Activated CD4-positive, alpha-beta T cell treated with anti-CD3 and anti-CD28 coated beads for 36 hours (primary cell): ENCODE measurements at regions of chr16 and their contacts with region 1.

Region 1: DNA sequence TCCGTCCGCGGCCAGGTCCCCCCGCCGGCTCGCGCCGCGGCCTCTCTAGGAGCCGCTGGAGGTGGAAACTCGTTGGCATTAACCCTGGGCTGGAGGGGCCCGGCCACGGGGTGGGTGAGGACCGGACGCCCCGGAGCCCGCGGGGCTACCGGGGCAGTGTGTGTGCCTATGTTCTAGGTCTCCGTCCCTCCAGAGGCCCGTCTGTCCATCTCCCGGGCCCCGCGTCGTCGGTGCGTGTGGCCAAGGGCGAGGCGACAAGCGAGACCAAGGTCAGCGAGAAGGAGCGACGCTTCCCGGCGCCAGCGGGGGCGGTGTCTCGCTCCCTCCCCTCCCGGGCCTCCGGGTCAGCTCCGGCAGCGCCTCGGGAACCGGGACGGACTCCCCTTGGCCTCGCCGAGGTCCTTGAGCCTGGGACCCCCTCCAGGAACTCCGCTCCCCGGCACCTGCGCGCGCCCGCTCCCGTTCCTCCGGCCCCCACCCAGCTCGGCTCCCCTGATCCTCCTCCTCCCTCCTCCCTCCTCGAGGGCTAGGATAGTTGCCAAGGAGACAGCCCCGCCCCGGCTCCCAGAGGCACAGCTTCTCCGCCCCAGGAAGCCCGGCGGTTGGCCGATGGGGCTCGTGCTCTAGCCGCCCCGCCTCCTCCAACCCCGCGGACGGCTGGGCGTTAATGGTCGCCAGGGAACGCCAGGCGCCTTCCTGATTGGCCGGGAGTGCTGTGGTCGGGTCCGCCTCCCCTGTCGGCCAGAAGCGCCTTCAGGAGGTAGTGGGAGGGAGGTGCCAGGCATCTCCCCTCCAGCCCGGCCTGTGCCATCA is 663 bp upstream of the ZNF768 start:
- DNase-seq: peak; percentile 98
- ATAC-seq: peak; percentile 93
- H3K4me3 Mint-ChIP-seq: peak overlapping the region; percentile 55
- H3K27ac Mint-ChIP-seq: peak overlapping the region; percentile 62
- H3K4me1 Mint-ChIP-seq: peaks cover 37% of the 10 kb centered on the region
- H3K27me3 Mint-ChIP-seq: no peaks in the 10 kb centered on the region

Region 2: DNA sequence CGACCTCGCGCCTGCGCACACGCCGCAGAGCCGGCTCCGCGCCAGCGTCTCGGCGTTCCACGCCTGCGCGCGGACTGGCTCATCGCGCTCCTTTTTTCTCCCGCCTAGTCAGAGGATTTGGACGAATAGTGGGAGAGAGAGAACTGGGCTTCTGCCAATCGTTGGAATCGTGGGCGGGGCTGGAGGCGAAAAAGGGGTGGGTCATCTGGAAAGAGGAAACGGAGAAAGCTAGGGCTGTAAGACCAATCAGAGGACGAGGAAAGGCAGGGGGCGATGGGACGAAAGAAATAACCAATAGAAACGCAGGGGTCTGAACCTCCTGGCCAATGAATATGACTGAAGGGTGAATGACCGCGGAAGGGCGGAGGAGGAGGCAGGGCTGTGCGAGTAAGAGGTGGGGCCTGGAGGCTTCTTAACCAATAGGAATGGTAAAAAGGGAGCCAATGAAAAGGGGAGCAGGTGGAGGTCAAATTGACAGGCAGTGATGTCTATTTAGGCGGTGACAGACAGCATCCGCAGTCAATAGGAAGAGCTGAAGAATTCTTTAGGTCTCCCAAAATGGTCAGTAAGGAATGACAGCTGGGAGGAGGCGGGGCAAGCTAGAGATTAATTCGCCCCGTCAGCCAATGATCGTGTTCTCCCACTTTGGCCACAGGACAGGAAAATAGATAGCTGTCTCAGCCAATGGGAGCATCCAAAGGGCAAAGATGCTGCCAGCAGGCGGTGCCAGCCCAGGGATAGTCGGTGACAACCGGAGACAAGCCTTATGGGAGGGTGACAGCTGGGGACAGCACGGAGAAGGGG is 156.4 kb before region 1 on chr16 and contains the start of gene TBC1D10B:
- CTCF ChIA-PET with region 1: no interaction called
- POLR2A ChIA-PET with region 1: no interaction called
- intact Hi-C with region 1: loop called in 1 of 2 experiments (anchors 1 kb)
- DNase-seq: peak; percentile 99
- ATAC-seq: peak; percentile 88
- H3K4me3 Mint-ChIP-seq: peak within 1 kb of the TSS; percentile 89
- H3K27ac Mint-ChIP-seq: peak within 1 kb of the TSS; percentile 97
- H3K4me1 Mint-ChIP-seq: peaks cover 40% of the 10 kb centered on the region
- H3K27me3 Mint-ChIP-seq: no peaks in the 10 kb centered on the region
- total RNA-seq, gene TBC1D10B: 38.1 to 43.4 TPM

Region 3: GRCh38 chr16:30458561-30459394 is 68.3 kb before region 1 on chr16:
- CTCF ChIA-PET with region 1: no interaction called
- POLR2A ChIA-PET with region 1: no interaction called
- intact Hi-C with region 1: loop called in 1 of 2 experiments (anchors 5 kb)
- DNase-seq: peak; percentile 94
- ATAC-seq: peak; percentile 96
- H3K4me3 Mint-ChIP-seq: peak overlapping the region; percentile 57
- H3K27ac Mint-ChIP-seq: peak overlapping the region; percentile 95
- H3K4me1 Mint-ChIP-seq: peaks cover 59% of the 10 kb centered on the region
- H3K27me3 Mint-ChIP-seq: no peaks in the 10 kb centered on the region

Region 4: DNA sequence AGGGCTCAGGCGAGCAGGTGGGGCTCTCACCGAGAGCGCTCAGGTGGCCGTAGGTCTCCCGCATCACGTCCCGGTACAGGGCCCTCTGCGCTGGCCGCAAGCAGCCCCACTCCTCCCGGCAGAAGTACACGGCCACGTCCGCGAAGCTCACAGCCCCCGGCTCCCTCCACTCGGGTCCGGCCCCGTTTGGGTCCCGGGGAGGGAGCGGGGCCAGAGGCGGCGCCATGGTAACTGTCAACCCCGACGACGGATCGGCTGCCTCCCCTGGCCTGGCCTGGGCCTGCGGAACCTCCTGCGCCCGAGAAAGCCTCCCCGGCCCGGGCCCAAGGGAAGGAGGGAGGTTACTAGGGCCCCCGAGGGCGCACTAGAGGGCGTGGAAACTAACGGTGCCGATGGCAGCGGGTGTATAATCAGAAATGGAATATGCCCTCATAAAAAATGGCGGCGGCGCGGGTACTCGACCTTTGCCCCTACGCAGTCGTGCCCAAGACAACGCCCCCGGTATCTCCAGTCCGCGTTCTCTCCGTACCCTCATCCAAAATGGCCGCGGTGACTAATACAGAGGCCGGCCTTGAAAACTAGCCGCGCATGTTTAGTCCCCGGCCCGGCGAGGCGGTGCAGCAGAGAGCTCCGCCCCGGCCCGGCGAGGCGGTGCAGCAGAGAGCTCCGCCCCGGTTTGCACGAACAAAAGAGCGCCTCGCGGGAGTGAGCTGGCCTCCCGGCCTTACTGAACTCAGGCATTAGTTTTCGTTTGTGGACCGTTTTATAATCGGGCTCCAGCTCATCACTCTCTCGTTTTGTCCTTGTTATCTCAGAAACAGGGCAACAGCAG is 31.1 kb after region 1 on chr16 and contains the start of gene ZNF764:
- CTCF ChIA-PET with region 1: interaction called, 4 read pairs
- POLR2A ChIA-PET with region 1: interaction called, 4 read pairs
- intact Hi-C with region 1: loop called (anchors 1 to 2 kb)
- DNase-seq: peak; percentile 99
- ATAC-seq: peak; percentile 96
- H3K4me3 Mint-ChIP-seq: peak within 1 kb of the TSS; percentile 85
- H3K27ac Mint-ChIP-seq: peak within 1 kb of the TSS; percentile 94
- H3K4me1 Mint-ChIP-seq: peaks cover 44% of the 10 kb centered on the region
- H3K27me3 Mint-ChIP-seq: no peaks in the 10 kb centered on the region
- total RNA-seq, gene ZNF764: 8.0 to 11.2 TPM

Region 5: DNA sequence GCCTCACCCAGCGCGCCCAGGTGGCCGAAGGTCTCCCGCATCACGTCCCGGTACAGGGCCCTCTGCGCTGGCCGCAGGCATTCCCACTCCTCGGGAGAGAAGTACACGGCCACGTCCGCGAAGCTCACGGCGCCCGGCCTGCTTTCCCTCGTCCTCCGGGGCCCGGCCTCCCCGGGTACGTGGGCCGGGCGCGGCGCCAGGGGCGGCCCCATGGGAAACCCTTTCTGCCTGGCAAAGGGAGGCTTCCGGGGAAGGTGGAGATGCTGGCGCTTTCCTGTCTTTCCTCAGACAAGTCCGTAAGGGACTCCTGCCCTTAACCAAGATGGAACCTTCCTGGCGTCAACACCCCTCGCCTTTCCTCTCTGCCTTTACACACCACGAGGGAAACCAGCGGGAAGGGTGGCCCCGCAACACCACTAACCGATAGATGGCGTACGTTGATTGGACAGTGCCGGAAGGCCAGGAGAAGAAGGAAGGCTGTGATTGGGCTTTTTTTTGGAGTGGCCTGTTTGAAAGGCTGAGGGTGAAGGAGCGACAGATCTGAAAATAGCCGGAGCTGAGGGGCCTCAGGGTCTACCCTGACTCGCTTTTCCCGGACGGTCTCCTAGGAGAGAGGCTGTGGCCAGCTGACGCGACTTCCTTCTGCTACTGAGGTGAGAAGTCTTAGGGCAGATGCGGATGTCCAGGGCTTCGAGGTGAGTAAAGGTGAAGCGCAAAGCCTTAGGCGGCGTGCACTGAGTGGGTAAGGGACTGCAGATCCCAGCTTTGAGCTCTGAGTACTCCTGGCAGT is 58.6 kb after region 1 on chr16 and contains the start of gene ZNF785:
- CTCF ChIA-PET with region 1: no interaction called
- POLR2A ChIA-PET with region 1: no interaction called
- intact Hi-C with region 1: loop called in 1 of 2 experiments (anchors 1 kb)
- DNase-seq: peak; percentile 96
- ATAC-seq: peak; percentile 99
- H3K4me3 Mint-ChIP-seq: peak within 1 kb of the TSS; percentile 87
- H3K27ac Mint-ChIP-seq: peak within 1 kb of the TSS; percentile 92
- H3K4me1 Mint-ChIP-seq: peaks cover 37% of the 10 kb centered on the region
- H3K27me3 Mint-ChIP-seq: no peaks in the 10 kb centered on the region
- total RNA-seq, gene ZNF785: 9.2 to 10.8 TPM

Region 6: GRCh38 chr16:30609926-30610839 is 83.2 kb after region 1 on chr16 and contains the start of gene ZNF689:
- CTCF ChIA-PET with region 1: no interaction called
- POLR2A ChIA-PET with region 1: no interaction called
- intact Hi-C with region 1: loop called in 1 of 2 experiments (anchors 1 kb)
- DNase-seq: peak; percentile 96
- ATAC-seq: peak; percentile 88
- H3K4me3 Mint-ChIP-seq: peak within 1 kb of the TSS; percentile 80
- H3K27ac Mint-ChIP-seq: peak within 1 kb of the TSS; percentile 96
- H3K4me1 Mint-ChIP-seq: peaks cover 19% of the 10 kb centered on the region
- H3K27me3 Mint-ChIP-seq: no peaks in the 10 kb centered on the region
- total RNA-seq, gene ZNF689: 9.0 to 10.7 TPM

Region 7: GRCh38 chr16:30650369-30651123 is 123.5 kb after region 1 on chr16 and contains the start of gene PRR14:
- CTCF ChIA-PET with region 1: no interaction called
- POLR2A ChIA-PET with region 1: interaction called, 4 read pairs
- intact Hi-C with region 1: loop called in 1 of 2 experiments (anchors 2 kb)
- DNase-seq: peak; percentile 100
- ATAC-seq: peak; percentile 82
- H3K4me3 Mint-ChIP-seq: peak within 1 kb of the TSS; percentile 95
- H3K27ac Mint-ChIP-seq: peak within 1 kb of the TSS; percentile 97
- H3K4me1 Mint-ChIP-seq: peaks cover 21% of the 10 kb centered on the region
- H3K27me3 Mint-ChIP-seq: no peaks in the 10 kb centered on the region
- total RNA-seq, gene PRR14: 76.8 to 77.8 TPM